ENCODE measurements at regions of chr1 and their contacts with region 1.

Region 1: DNA sequence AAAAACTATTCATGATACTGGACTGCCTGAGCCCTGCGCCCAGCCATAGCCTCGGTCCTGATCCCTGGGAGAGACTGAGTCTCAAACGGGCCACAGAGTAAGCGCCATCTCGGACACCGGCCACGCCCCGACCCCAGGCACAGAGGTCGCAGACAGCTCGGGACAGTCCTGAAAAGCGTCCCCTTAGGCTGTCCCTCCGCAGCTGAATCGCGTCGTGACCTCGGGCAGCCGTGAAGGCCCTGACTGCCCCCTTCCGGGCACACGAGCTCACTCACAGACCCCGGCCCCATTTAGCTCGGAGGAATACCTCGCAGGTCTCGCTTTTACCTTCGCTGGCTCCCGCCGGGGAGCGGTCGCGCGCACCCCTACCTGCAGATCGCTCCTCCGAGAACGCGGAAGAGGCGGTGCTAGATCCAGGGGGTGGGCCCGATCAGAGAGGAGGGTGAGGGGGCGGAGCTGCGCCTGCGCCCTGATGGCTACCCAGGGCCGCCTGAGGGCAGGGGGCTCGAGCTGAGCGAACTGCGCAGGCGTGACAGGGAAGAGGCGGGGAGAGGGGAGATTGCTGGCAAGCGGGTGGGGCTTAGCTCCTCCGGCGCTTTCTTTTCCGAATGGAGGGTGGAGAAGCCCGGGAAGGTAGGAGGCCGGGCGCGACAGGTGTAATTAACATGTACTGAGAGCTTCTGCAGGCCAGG is at the start of gene MKNK1:
- DNase-seq: peak; percentile 99
- H3K4me3 Mint-ChIP-seq: peak within 1 kb of the TSS; percentile 85
- H3K27ac Mint-ChIP-seq: peak within 1 kb of the TSS; percentile 77
- H3K4me1 Mint-ChIP-seq: peaks cover 53% of the 10 kb centered on the region
- H3K27me3 Mint-ChIP-seq: no peaks in the 10 kb centered on the region
- total RNA-seq, gene MKNK1: 28.2 to 28.5 TPM

Region 2: DNA sequence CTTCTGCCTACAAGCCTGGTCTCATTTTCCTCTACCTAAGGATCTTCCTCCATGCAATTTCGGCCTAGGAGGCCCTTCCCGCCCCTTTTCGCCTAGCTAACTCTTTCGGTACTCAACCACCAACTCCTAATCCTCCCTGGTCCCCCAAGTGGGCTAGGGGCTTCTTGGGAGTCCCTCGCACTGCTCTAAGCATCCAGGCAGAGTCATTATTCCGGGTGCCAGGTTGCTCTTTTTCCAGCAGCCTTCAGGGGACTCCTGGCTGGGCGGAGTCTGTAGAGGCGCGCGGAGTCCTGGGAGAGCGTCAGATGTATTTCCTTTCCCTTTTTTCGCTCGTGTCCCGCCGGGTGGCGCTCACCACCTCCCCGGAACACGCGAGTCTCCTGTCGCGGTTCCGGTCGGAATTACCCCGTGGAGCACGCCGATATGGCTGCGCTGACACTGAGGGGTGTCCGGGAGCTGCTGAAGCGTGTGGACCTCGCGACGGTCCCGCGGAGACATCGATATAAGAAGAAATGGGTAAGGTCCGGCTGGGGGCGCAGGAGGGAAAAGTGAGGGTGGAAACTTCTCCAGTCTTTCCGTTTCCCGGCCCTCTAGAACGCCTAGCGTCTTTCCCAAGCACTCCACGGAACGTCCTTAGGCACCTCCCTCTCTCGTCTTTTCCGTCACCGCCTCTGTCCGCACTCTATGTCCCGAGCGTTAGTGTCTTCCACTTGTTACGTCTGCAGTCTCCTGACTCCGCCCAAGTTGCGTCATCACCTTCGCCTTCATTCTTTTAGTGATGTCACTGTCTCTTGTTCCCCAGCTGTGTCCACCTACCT is 263.4 kb before region 1 on chr1 and contains the start of gene NSUN4:
- CTCF ChIA-PET with region 1: no interaction called
- POLR2A ChIA-PET with region 1: no interaction called
- intact Hi-C with region 1: loop called (anchors 10 kb)
- DNase-seq: peak; percentile 93
- H3K4me3 Mint-ChIP-seq: peak within 1 kb of the TSS; percentile 94
- H3K27ac Mint-ChIP-seq: peak within 1 kb of the TSS; percentile 98
- H3K4me1 Mint-ChIP-seq: peaks cover 44% of the 10 kb centered on the region
- H3K27me3 Mint-ChIP-seq: no peaks in the 10 kb centered on the region
- total RNA-seq, gene NSUN4: 29.1 to 29.9 TPM

Region 3: DNA sequence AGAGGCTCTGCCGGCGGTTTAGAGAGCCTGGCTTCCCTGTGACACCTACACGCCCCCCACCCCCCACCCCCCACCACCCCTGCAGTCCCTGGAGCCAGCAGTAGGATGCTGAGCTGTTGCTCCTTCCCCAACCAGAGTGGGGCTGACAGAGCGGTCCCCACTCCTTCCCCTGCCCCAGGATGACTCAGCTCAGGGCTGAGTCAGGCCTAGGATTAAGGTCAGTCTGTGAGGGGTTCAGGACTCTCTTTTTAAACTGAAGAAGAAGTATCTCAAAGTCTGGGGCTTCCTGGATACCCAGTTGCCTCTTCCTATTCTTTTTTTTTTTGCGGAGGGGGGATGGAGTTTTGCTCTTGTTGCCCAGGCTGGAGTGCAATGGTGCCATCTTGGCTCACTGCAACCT is 95.2 kb before region 1 on chr1:
- CTCF ChIA-PET with region 1: no interaction called
- POLR2A ChIA-PET with region 1: no interaction called
- intact Hi-C with region 1: no loop called
- DNase-seq: no peak
- H3K4me3 Mint-ChIP-seq: no peak overlapping the region
- H3K27ac Mint-ChIP-seq: no peak overlapping the region
- H3K4me1 Mint-ChIP-seq: no peaks in the 10 kb centered on the region
- H3K27me3 Mint-ChIP-seq: peaks cover 16% of the 10 kb centered on the region

Region 4: GRCh38 chr1:46616277-46617107 is 12.5 kb after region 1 on chr1 and contains the start of gene MOB3C:
- CTCF ChIA-PET with region 1: interaction called, 16 read pairs
- POLR2A ChIA-PET with region 1: interaction called, 47 read pairs
- intact Hi-C with region 1: loop called (anchors 1 kb)
- DNase-seq: peak; percentile 79
- H3K4me3 Mint-ChIP-seq: peak within 1 kb of the TSS; percentile 86
- H3K27ac Mint-ChIP-seq: peak within 1 kb of the TSS; percentile 81
- H3K4me1 Mint-ChIP-seq: peaks cover 51% of the 10 kb centered on the region
- H3K27me3 Mint-ChIP-seq: no peaks in the 10 kb centered on the region
- total RNA-seq, gene MOB3C: 8.2 to 10.0 TPM

Region 5: GRCh38 chr1:46642115-46642680 is 38.2 kb after region 1 on chr1:
- CTCF ChIA-PET with region 1: no interaction called
- POLR2A ChIA-PET with region 1: no interaction called
- intact Hi-C with region 1: no loop called
- DNase-seq: no peak
- H3K4me3 Mint-ChIP-seq: no peak overlapping the region
- H3K27ac Mint-ChIP-seq: no peak overlapping the region
- H3K4me1 Mint-ChIP-seq: peaks cover 7% of the 10 kb centered on the region
- H3K27me3 Mint-ChIP-seq: no peaks in the 10 kb centered on the region

Region 6: GRCh38 chr1:46667782-46668760 is 64.1 kb after region 1 on chr1 and contains the start of gene ATPAF1:
- CTCF ChIA-PET with region 1: interaction called, 4 read pairs
- POLR2A ChIA-PET with region 1: interaction called, 9 read pairs
- intact Hi-C with region 1: loop called (anchors 5 kb)
- DNase-seq: peak; percentile 85
- H3K4me3 Mint-ChIP-seq: no peak within 1 kb of the TSS
- H3K27ac Mint-ChIP-seq: peak within 1 kb of the TSS; percentile 36
- H3K4me1 Mint-ChIP-seq: peaks cover 16% of the 10 kb centered on the region
- H3K27me3 Mint-ChIP-seq: no peaks in the 10 kb centered on the region
- total RNA-seq, gene ATPAF1: 45.0 to 45.9 TPM

Region 7: DNA sequence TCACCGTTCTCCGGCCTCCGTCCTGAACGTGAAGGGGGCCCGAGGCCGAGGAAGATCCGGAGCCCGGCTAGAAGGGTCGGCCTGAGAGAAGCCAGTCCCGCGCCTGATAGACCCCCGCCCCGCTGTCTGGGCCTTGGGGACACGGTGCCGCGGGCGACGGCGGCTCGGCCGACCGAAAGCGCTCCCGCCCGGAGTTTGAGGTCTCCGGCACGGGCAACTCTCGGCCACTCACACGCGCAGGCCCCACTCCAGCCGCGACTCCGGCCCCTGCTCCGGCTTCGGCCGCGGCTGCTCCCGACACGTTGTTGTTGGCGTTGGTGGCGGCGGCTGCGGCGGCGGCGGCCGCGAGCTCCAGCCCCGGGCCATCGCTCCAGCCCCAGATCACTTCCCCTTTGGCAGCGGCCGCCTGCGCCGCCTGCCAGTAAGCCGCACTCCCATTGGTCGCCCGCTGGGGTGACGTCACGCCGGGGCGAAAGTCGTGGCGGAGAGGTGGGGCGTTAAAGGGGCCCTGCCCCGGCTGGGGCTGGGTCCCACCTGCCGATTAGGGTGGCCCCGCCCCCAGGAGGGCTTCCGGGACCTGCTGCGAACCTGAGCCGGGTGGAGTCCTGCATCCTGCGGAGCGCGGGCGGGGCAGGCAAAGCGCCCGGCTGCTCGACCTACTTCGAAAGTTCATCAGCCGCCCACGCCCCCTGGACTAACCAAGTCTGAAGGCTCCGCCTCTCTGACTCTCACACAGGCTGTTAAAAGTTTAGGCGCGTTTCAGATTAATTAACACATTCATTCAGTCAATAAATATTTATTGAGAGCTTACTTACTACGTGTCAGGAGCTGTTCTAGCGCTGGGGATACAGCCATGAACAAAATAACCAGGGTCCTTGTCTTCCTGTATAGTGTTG is 115.0 kb after region 1 on chr1 and contains the start of gene EFCAB14:
- CTCF ChIA-PET with region 1: interaction called, 7 read pairs
- POLR2A ChIA-PET with region 1: no interaction called
- intact Hi-C with region 1: loop called (anchors 2 kb)
- DNase-seq: peak; percentile 100
- H3K4me3 Mint-ChIP-seq: peak within 1 kb of the TSS; percentile 90
- H3K27ac Mint-ChIP-seq: peak within 1 kb of the TSS; percentile 85
- H3K4me1 Mint-ChIP-seq: peaks cover 37% of the 10 kb centered on the region
- H3K27me3 Mint-ChIP-seq: no peaks in the 10 kb centered on the region
- total RNA-seq, gene EFCAB14: 47.1 to 48.0 TPM

Region 8: DNA sequence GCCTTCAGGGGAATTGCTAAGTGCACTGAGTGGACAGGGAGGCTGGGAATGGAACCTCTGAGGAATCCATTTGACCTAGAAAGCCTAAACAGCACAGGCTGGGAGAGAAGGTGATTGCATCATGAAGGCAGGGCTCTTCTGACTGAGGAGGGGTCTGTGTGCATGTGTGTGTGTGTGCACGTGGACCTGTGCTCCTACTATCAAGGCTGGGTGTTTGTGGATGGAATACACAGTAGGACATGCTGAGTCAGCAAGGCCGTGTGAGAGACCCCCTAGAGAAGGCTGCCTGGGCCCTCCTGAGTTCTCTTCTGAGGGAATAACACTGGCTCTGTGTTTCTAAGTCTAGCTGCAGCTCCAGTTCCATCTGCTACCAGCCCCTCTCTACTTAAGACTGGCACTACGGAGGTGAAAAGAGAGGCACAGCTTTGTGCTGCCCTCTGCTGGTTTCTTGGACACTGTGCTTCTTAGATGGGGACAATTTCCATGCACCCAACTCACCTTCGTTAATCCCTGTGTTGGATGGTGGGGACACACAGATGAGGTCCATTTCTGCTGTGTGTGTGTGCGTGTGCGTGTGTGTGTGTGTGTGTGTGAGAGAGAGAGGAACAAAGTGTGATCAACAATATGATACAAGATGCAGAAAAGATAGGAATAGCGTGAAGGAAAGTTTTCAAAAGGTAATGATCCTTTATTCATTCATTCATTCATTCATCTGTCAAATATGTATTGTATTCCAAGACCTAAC is 121.2 kb after region 1 on chr1:
- CTCF ChIA-PET with region 1: interaction called, 15 read pairs
- POLR2A ChIA-PET with region 1: no interaction called
- intact Hi-C with region 1: no loop called
- DNase-seq: peak; percentile 79
- H3K4me3 Mint-ChIP-seq: no peak overlapping the region
- H3K27ac Mint-ChIP-seq: no peak overlapping the region
- H3K4me1 Mint-ChIP-seq: no peaks in the 10 kb centered on the region
- H3K27me3 Mint-ChIP-seq: peaks cover 31% of the 10 kb centered on the region